ENCODE measurements at regions of chr5 and their contacts with region 1.

Region 1: DNA sequence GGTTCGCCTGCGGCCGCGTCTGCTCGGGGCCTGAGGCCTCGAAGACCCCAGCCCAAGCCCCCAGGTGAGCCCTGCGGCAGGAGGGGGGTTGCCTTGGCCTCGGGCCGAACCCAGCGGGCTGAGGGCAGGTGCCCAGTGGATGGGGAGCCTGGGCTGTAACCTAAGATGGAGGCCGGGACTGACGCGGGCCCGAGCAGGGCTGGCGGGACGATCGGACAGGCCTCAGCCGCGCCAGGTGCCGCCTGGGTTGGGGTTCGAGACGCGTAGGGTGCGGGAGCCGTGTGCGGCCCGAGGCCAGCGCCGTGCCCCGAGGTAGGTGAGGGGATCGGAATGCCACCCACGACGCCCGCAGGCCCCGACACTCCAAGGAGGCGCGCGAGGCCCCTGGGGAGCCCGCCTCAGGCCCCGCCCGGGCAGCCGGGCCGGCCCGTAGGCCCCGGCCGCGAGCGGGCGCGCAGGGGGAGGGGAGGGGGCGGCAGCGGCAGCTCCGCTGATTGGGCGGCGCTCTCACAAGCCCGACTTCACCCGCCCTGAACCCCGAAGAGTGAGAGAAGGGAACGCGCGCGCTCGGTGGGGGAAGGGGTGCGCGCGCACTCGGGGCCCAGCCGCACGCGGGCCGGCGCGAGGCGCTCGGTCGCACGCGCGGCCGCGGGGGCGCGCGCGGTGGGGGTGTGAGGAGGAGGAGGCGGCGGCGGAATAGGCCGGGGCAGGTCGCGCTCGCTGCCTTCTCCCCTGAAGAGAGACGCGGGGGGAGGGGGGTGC is at the start of gene NSD1:
- DNase-seq: peak; percentile 95
- ATAC-seq: peak; percentile 81
- H3K4me3 Mint-ChIP-seq: peak within 1 kb of the TSS; percentile 91
- H3K27ac Mint-ChIP-seq: peak within 1 kb of the TSS; percentile 89
- H3K4me1 Mint-ChIP-seq: peaks cover 48% of the 10 kb centered on the region
- H3K27me3 Mint-ChIP-seq: no peaks in the 10 kb centered on the region
- total RNA-seq, gene NSD1: 65.6 to 68.2 TPM

Region 2: DNA sequence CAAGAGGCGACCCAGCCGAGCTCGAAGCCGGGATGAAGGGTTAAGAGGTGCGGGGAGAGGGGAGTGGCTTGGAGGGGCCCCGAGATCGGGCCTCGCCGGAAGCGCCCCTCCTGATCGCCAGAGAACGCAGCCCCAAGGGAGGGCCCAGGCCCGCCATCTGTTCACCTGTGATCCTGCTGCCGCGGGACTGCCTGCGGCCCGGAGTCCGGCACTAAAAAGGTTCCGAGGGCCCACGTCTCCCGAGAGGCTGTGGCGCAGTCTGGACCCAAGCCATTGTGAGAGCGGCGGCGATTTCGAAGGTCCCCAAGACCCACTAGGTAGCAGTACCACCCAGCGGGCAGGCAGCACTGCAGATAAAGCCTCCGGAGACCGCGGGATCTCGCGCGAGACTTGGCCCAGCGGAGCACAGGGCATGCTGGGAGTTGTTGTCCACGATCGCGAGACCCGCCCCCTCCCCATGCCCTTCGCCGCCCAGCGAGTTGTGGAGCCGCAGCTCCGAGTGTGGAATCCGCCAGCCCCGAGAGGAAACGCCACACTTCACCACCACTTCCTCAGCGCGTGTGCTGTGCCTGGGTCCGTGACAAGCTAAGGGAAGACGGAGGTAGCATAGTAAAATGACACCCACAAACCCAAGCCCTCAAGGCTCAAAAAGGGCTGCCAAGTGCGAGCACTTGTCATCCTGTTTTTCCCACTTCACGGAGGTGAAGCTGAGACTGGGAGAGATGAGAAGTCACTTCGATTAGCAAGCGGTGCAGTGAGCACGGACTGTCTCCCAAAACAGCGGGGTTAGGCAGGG is 771.6 kb before region 1 on chr5 and contains the start of gene KIAA1191:
- CTCF ChIA-PET with region 1: no interaction called
- POLR2A ChIA-PET with region 1: no interaction called
- intact Hi-C with region 1: loop called in 1 of 2 experiments (anchors 5 kb)
- DNase-seq: peak; percentile 97
- ATAC-seq: peak; percentile 91
- H3K4me3 Mint-ChIP-seq: peak within 1 kb of the TSS; percentile 95
- H3K27ac Mint-ChIP-seq: peak within 1 kb of the TSS; percentile 94
- H3K4me1 Mint-ChIP-seq: peaks cover 32% of the 10 kb centered on the region
- H3K27me3 Mint-ChIP-seq: no peaks in the 10 kb centered on the region
- total RNA-seq, gene KIAA1191: 42.2 to 52.6 TPM

Region 3: GRCh38 chr5:176388444-176389134 is 744.7 kb before region 1 on chr5 and contains the starts of genes HIGD2A and NOP16:
- CTCF ChIA-PET with region 1: no interaction called
- POLR2A ChIA-PET with region 1: interaction called, 3 read pairs
- intact Hi-C with region 1: loop called in 1 of 2 experiments (anchors 2 kb)
- DNase-seq: peak; percentile 100
- ATAC-seq: peak; percentile 93
- H3K4me3 Mint-ChIP-seq: peak within 1 kb of the TSS; percentile 95
- H3K27ac Mint-ChIP-seq: peak within 1 kb of the TSS; percentile 100
- H3K4me1 Mint-ChIP-seq: peaks cover 31% of the 10 kb centered on the region
- H3K27me3 Mint-ChIP-seq: no peaks in the 10 kb centered on the region
- total RNA-seq, gene HIGD2A: 104 to 140 TPM
- total RNA-seq, gene NOP16: 54.3 to 65.4 TPM

Region 4: GRCh38 chr5:177022384-177023308 is 110.6 kb before region 1 on chr5 and contains the start of gene ZNF346:
- CTCF ChIA-PET with region 1: no interaction called
- POLR2A ChIA-PET with region 1: no interaction called
- intact Hi-C with region 1: loop called in 1 of 2 experiments (anchors 1 kb)
- DNase-seq: peak; percentile 97
- ATAC-seq: peak; percentile 97
- H3K4me3 Mint-ChIP-seq: peak within 1 kb of the TSS; percentile 91
- H3K27ac Mint-ChIP-seq: peak within 1 kb of the TSS; percentile 95
- H3K4me1 Mint-ChIP-seq: peaks cover 34% of the 10 kb centered on the region
- H3K27me3 Mint-ChIP-seq: no peaks in the 10 kb centered on the region
- total RNA-seq, gene ZNF346: 16.5 to 23.3 TPM

Region 5: DNA sequence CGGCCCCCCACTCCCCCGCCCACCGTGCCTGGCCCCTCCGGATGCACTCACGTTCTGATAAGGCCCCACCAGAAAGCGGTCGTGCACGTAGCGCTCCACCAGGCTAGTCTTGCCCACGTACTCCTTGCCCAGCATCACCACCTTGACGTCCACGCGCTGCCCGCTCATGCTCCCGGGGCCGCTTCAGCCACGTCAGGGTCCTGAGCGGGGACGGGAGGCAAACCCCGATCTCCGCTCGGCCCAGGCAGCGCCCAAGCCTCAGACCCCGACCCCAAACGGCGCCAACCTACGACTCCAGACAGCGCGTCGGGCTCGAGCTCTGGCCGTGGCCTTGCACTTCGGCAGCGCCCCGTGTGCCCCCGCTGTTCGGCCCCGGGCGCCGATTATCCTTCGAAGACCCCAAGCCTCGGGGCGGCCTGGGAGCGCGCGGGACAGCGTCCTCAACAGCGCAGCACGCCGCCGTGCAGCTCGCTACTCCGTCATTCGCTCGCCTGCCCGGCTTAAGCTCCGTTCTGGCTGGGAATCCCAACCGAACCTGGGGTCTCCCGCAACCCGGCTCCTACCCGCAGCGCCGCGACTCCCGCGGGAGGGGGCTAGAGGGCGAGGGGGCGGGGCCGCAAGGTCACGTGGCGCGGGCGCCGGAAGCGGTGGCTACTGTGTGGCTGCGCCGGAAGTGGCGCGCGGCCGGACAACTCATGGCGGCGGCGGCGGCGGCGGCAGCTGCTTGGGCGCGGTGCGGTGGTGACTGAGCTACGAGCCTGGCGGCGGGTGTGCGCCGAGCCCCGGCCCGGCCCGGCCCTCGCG is 170.1 kb after region 1 on chr5 and contains the starts of genes PRELID1 and RAB24:
- CTCF ChIA-PET with region 1: interaction called, 9 read pairs
- POLR2A ChIA-PET with region 1: no interaction called
- intact Hi-C with region 1: loop called (anchors 1 to 5 kb)
- DNase-seq: peak; percentile 95
- ATAC-seq: peak; percentile 69
- H3K4me3 Mint-ChIP-seq: peak within 1 kb of the TSS; percentile 93
- H3K27ac Mint-ChIP-seq: peak within 1 kb of the TSS; percentile 90
- H3K4me1 Mint-ChIP-seq: peaks cover 59% of the 10 kb centered on the region
- H3K27me3 Mint-ChIP-seq: no peaks in the 10 kb centered on the region
- total RNA-seq, gene PRELID1: 266 to 362 TPM
- total RNA-seq, gene RAB24: 10.9 to 21.0 TPM

Region 6: GRCh38 chr5:177311723-177312648 is 178.7 kb after region 1 on chr5 and contains the start of gene MXD3:
- CTCF ChIA-PET with region 1: interaction called, 9 read pairs
- POLR2A ChIA-PET with region 1: interaction called, 3 read pairs
- intact Hi-C with region 1: loop called in 1 of 2 experiments (anchors 1 kb)
- DNase-seq: peak; percentile 99
- ATAC-seq: peak; percentile 88
- H3K4me3 Mint-ChIP-seq: peak within 1 kb of the TSS; percentile 85
- H3K27ac Mint-ChIP-seq: peak within 1 kb of the TSS; percentile 84
- H3K4me1 Mint-ChIP-seq: peaks cover 28% of the 10 kb centered on the region
- H3K27me3 Mint-ChIP-seq: no peaks in the 10 kb centered on the region
- total RNA-seq, gene MXD3: 21.3 to 27.2 TPM